HEK293 (cell line): ENCODE measurements at regions of chr19 and their contacts with region 1.

Region 1: GRCh38 chr19:29694669-29695627 is 20.1 kb downstream of the C19orf12 start:
- H3K4me3 ChIP-seq: no peak overlapping the region
- H3K27ac ChIP-seq: no peak overlapping the region
- H3K4me1 ChIP-seq: no peaks in the 10 kb centered on the region
- CTCF ChIP-seq: peak; percentile 98

Region 2: DNA sequence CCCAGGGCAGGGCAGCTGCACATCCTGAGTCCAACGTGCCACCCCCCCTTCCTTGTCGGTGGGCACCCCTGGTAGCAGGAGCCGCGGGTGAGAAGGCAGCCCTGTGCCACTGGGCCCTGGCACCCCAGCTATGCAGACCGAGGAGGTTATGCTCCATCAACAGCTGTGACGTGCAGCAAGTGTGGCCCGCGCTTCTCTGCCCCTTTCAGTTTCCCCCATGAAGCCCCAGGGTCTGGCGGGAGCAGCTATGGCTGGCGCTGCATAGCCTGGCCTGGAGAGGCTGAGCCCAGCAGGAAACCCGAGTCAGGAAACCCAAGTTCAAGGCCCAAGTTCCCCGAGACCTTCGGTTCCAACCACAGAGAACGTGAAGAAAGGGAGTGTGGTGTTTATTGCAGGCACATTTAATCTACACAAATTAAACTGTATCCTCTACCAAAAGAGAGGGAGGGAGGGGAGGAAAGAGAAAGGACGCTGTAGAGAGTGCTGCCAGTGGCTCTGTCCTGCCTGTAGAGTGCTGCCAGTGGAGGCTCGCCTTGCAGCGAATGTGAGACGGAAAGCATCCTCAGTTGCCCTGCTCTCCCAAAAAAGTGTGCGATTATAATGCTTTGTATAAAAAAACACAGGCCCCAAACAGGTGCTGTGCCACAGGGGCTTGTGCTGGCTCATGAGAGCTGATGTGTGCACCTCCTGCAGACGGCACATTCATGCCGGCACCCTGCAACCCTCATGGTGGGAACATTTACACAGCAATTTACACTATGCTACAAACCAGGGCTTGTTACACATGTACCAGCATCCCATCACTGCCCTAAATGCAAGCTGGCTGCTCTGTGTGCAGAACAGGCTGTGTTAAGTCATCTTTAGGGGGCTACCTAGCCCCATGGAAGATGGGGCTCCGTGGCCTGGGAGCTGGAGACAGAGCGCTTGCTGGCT is 72.5 kb before region 1 on chr19:
- CTCF ChIA-PET with region 1: interaction called, 13 read pairs
- POLR2A ChIA-PET with region 1: no interaction called
- H3K4me3 ChIP-seq: no peak overlapping the region
- H3K27ac ChIP-seq: no peak overlapping the region
- H3K4me1 ChIP-seq: 0 out of 2 replicates have a peak, but pooled peaks cover 3% of the 10 kb centered on the region
- CTCF ChIP-seq: no peak

Region 3: GRCh38 chr19:29665215-29665825 is 29.6 kb before region 1 on chr19 and contains the start of gene PLEKHF1:
- CTCF ChIA-PET with region 1: interaction called, 18 read pairs
- POLR2A ChIA-PET with region 1: no interaction called
- H3K4me3 ChIP-seq: peak within 1 kb of the TSS; percentile 59
- H3K27ac ChIP-seq: peak within 1 kb of the TSS; percentile 71; the same call in 1 of the 2 replicates
- H3K4me1 ChIP-seq: peaks cover 52% of the 10 kb centered on the region
- CTCF ChIP-seq: peak; percentile 61; the same call in 1 of the 2 replicates

Region 4: GRCh38 chr19:29671393-29672160 is 23.4 kb before region 1 on chr19:
- CTCF ChIA-PET with region 1: interaction called, 23 read pairs
- POLR2A ChIA-PET with region 1: no interaction called
- H3K4me3 ChIP-seq: no peak overlapping the region
- H3K27ac ChIP-seq: peak overlapping the region; percentile 32
- H3K4me1 ChIP-seq: peaks cover 27% of the 10 kb centered on the region
- CTCF ChIP-seq: no peak

Region 5: GRCh38 chr19:29680447-29680846 is 14.5 kb before region 1 on chr19:
- CTCF ChIA-PET with region 1: interaction called, 15 read pairs
- POLR2A ChIA-PET with region 1: no interaction called
- H3K4me3 ChIP-seq: no peak overlapping the region
- H3K27ac ChIP-seq: no peak overlapping the region
- H3K4me1 ChIP-seq: no peaks in the 10 kb centered on the region
- CTCF ChIP-seq: no peak

Region 6: GRCh38 chr19:29724102-29724641 is 29.2 kb after region 1 on chr19:
- CTCF ChIA-PET with region 1: interaction called, 20 read pairs
- POLR2A ChIA-PET with region 1: no interaction called
- H3K4me3 ChIP-seq: no peak overlapping the region
- H3K27ac ChIP-seq: no peak overlapping the region
- H3K4me1 ChIP-seq: no peaks in the 10 kb centered on the region; the same call in 1 of the 2 replicates
- CTCF ChIP-seq: no peak

Region 7: DNA sequence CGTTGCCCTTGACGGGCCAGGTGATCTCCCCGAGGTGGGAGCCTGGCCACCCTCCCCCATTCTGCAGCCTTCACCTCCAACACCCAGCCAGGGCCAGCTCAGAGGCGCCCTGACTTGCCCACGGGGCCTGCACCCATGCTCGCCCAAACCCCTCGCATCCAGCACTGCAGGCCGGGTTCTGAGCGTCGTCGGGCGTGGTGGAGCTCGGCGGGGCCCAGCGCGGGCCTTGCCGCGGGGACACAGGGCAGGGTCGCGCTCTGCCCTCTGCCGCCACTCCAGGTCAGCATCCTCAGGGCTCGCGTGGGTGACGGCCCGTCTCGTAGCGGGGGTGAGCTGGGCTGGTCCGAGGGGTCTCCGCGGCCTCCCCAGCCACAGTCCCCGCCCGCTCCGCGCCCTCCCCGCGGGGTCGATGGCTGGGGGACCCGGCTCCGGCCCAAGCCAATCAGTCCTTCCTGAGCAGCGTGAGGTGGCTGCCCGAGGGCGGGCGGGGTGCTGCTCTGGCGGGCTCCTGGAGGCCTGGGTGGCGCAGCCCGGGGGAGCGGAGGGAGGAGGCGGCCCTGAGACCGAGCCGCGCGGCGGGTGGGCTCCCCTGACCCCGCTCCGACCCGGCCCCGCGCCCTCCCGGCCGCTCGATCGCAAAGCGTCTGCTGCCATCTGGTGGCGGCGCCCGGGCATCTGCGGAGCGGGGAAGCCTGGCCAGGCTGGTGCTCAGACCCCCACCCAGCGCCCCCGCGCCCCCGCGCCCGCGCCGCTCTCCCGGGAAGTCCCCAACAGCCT is 178.3 kb after region 1 on chr19:
- CTCF ChIA-PET with region 1: interaction called, 10 read pairs
- POLR2A ChIA-PET with region 1: no interaction called
- H3K4me3 ChIP-seq: peak overlapping the region; percentile 47
- H3K27ac ChIP-seq: peak overlapping the region; percentile 76; the same call in 1 of the 2 replicates
- H3K4me1 ChIP-seq: peaks cover 12% of the 10 kb centered on the region
- CTCF ChIP-seq: peak; percentile 86